Activated B cell treated with CpG ODN at 0.5 μM for 24 hours (primary cell): ENCODE measurements at regions of chr2 and their contacts with region 1.

Region 1: GRCh38 chr2:68362069-68362468 is 3.0 kb upstream of the PLEK start:
- DNase-seq: peak; percentile 63
- ATAC-seq: peak; percentile 66
- H3K4me3 Mint-ChIP-seq: peak overlapping the region; percentile 84
- H3K27ac Mint-ChIP-seq: peak overlapping the region; percentile 91
- H3K4me1 Mint-ChIP-seq: peaks cover 56% of the 10 kb centered on the region
- H3K27me3 Mint-ChIP-seq: no peaks in the 10 kb centered on the region
- CTCF ChIP-seq: peak; percentile 33

Region 2: DNA sequence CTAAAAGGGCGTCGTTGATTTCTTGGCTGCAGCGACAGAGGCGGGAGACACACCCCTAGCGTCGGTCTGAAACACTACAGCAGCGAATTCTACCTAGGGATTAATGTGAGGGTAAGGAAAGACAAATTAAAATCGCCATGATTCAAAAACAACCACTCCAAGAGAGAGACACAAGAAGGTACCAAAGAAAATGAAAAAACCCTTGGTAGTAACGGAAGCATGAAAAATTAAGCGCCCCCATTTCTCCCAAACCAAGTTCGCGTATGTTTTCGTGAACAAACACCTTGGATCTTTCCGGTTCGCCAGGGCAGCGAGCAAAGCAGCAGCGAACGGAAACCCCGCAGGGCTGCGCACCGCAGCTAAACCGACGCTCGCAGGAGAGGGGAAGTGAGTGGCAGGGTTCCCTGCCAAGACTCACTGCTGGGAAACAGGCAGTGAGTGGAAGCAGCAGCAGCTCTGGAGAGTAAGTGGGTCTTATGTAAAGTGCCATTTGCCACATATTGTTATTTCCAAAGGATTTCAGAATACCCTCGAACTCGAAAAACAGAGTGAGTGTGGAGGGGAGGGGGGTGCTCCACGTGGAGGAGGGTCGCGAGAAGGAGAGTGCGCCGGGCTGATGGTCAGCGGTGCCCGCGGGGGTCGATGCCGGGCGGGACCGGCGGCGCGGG is 110.7 kb before region 1 on chr2:
- CTCF ChIA-PET with region 1: interaction called, 3 read pairs
- POLR2A ChIA-PET with region 1: interaction called, 5 read pairs
- intact Hi-C with region 1: loop called (anchors 1 kb)
- DNase-seq: peak; percentile 41
- ATAC-seq: peak; percentile 66
- H3K4me3 Mint-ChIP-seq: peak overlapping the region; percentile 89
- H3K27ac Mint-ChIP-seq: peak overlapping the region; percentile 92
- H3K4me1 Mint-ChIP-seq: peaks cover 35% of the 10 kb centered on the region
- H3K27me3 Mint-ChIP-seq: no peaks in the 10 kb centered on the region
- CTCF ChIP-seq: no peak

Region 3: GRCh38 chr2:68385220-68385906 is 23.3 kb after region 1 on chr2:
- CTCF ChIA-PET with region 1: interaction called, 5 read pairs
- POLR2A ChIA-PET with region 1: interaction called, 15 read pairs
- intact Hi-C with region 1: loop called (anchors 1 kb)
- DNase-seq: no peak
- ATAC-seq: peak; percentile 69
- H3K4me3 Mint-ChIP-seq: peak overlapping the region; percentile 29
- H3K27ac Mint-ChIP-seq: peak overlapping the region; percentile 91
- H3K4me1 Mint-ChIP-seq: peaks cover 97% of the 10 kb centered on the region
- H3K27me3 Mint-ChIP-seq: no peaks in the 10 kb centered on the region
- CTCF ChIP-seq: no peak

Region 4: DNA sequence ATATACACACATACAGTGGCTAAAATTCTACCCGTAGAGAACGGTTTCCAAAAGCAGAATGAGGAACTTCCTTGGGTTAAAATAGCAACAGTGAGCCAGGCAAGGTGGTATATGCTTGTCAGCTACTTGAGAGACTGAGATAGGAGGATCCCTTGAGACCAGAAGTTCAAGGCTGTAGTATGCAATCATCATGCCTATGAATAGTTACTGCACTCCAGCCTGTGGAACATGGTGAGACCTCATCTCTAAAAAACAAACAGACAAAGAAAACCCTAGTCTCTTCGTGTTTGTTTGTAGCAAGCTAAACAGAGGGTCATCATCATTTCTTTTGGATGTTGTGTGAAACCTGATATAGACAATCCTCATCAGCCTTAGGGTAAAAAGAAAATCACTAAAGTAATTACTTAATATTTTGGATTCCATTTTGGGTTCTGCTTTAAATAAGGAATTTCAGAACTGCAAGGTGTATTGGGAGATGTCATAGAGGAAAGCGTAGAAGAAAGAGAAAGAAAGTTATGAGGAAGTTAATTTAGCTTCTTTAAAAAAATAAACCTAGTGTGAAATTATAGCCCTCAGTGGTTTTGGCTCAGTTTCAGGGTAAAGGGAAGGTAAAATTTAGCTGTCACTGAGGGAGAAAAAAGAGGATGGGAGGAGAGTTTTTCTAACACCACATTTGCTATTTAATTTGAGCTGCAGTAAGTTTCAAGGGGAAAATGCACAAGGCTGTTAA is 49.5 kb after region 1 on chr2:
- CTCF ChIA-PET with region 1: interaction called, 6 read pairs
- POLR2A ChIA-PET with region 1: interaction called, 6 read pairs
- intact Hi-C with region 1: loop called (anchors 1 kb)
- DNase-seq: no peak
- ATAC-seq: peak; percentile 98
- H3K4me3 Mint-ChIP-seq: peak overlapping the region; percentile 78
- H3K27ac Mint-ChIP-seq: peak overlapping the region; percentile 93
- H3K4me1 Mint-ChIP-seq: peaks cover 97% of the 10 kb centered on the region
- H3K27me3 Mint-ChIP-seq: no peaks in the 10 kb centered on the region
- CTCF ChIP-seq: no peak

Region 5: GRCh38 chr2:68506170-68506569 is 144.1 kb after region 1 on chr2:
- CTCF ChIA-PET with region 1: no interaction called
- POLR2A ChIA-PET with region 1: no interaction called
- intact Hi-C with region 1: no loop called
- DNase-seq: no peak
- ATAC-seq: no peak
- H3K4me3 Mint-ChIP-seq: no peak overlapping the region
- H3K27ac Mint-ChIP-seq: no peak overlapping the region
- H3K4me1 Mint-ChIP-seq: no peaks in the 10 kb centered on the region
- H3K27me3 Mint-ChIP-seq: no peaks in the 10 kb centered on the region
- CTCF ChIP-seq: no peak

Region 6: GRCh38 chr2:68734688-68735525 is 372.8 kb after region 1 on chr2 and contains the start of gene ARHGAP25:
- CTCF ChIA-PET with region 1: no interaction called
- POLR2A ChIA-PET with region 1: no interaction called
- intact Hi-C with region 1: loop called (anchors 10 kb)
- DNase-seq: peak; percentile 45
- ATAC-seq: peak; percentile 74
- H3K4me3 Mint-ChIP-seq: no peak within 1 kb of the TSS
- H3K27ac Mint-ChIP-seq: no peak within 1 kb of the TSS
- H3K4me1 Mint-ChIP-seq: peaks cover 37% of the 10 kb centered on the region
- H3K27me3 Mint-ChIP-seq: no peaks in the 10 kb centered on the region
- CTCF ChIP-seq: no peak
- total RNA-seq, gene ARHGAP25: 324 and 336 TPM in 2 replicates